ENCODE measurements at regions of chr14 and their contacts with region 1.

Region 1: GRCh38 chr14:30621940-30622830 is at the start of gene SCFD1:
- DNase-seq: peak; percentile 94
- ATAC-seq: peak; percentile 98
- H3K4me3 ChIP-seq: peak within 1 kb of the TSS; percentile 78 to 98 (median 88)
- H3K4me3 Mint-ChIP-seq: peak within 1 kb of the TSS; percentile 98
- H3K27ac ChIP-seq: peak within 1 kb of the TSS; percentile 82 to 94
- H3K27ac Mint-ChIP-seq: peak within 1 kb of the TSS; percentile 98
- H3K4me1 ChIP-seq: peaks cover 14 to 28% of the 10 kb centered on the region in 2 donors
- H3K4me1 Mint-ChIP-seq: peaks cover 47% of the 10 kb centered on the region
- H3K27me3 ChIP-seq: no peaks in the 10 kb centered on the region
- H3K27me3 Mint-ChIP-seq: no peaks in the 10 kb centered on the region
- CTCF ChIP-seq: no peak
- total RNA-seq, gene SCFD1: 73.0 and 79.0 TPM in 2 replicates

Region 2: DNA sequence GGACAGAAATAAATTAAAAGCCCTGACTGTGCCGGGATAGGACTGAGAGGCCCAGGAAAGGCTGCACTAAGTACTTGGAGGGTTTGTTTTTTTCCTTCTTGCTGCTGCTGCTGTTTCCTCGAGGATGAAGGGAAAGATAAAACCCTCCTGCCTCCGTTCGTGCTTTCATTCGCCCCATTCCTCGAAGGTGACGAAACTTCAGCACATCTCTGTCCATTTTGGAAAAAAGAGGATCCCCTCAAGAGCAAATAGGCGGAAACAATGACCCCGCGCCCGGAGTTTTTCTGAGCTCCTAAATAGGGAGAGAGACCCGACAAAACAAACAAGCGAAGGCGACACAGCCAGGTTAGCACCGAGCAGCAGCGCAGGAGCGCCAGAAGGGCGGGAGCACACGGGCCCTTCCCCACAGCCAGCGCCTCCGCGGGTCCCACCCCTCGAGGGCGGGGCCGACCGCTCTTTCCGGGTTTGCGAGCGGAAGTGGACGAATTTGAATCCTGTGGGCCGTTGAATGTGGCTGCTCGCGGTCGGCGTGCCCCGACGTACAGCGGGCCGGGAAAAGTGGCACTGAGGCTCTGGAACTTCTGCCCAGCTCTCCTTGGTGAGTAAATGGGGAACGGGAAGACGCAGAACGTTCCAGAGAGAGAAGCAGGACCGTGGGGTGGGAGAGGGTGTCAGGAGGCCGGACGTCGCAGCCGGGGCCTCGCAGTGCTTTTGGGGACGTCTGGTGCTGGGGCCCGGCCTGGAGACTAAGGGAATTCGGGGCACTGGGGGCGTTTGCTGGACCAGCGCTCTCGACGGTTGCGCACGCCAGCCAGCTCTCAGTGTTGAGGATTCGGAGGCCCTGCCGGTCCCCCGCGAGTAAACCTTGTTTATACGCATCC is 63.3 kb before region 1 on chr14 and contains the start of gene G2E3:
- CTCF ChIA-PET with region 1: no interaction called
- POLR2A ChIA-PET with region 1: interaction called, 3 read pairs
- intact Hi-C with region 1: loop called (anchors 1 kb)
- DNase-seq: peak; percentile 90
- ATAC-seq: peak; percentile 99
- H3K4me3 ChIP-seq: peak within 1 kb of the TSS; percentile 87 to 99 (median 95)
- H3K4me3 Mint-ChIP-seq: peak within 1 kb of the TSS; percentile 100
- H3K27ac ChIP-seq: peak within 1 kb of the TSS; percentile 77 to 89
- H3K27ac Mint-ChIP-seq: peak within 1 kb of the TSS; percentile 98
- H3K4me1 ChIP-seq: peaks cover 15 to 17% of the 10 kb centered on the region in 2 donors
- H3K4me1 Mint-ChIP-seq: peaks cover 32% of the 10 kb centered on the region
- H3K27me3 ChIP-seq: no peaks in the 10 kb centered on the region
- H3K27me3 Mint-ChIP-seq: no peaks in the 10 kb centered on the region
- CTCF ChIP-seq: no peak
- total RNA-seq, gene G2E3: 29.2 and 35.4 TPM in 2 replicates

Region 3: GRCh38 chr14:30632730-30633129 is 10.5 kb after region 1 on chr14:
- CTCF ChIA-PET with region 1: no interaction called
- POLR2A ChIA-PET with region 1: interaction called, 12 read pairs
- intact Hi-C with region 1: no loop called
- DNase-seq: no peak
- ATAC-seq: no peak
- H3K4me3 ChIP-seq: no peak overlapping the region
- H3K4me3 Mint-ChIP-seq: no peak overlapping the region
- H3K27ac ChIP-seq: no peak overlapping the region
- H3K27ac Mint-ChIP-seq: no peak overlapping the region
- H3K4me1 ChIP-seq: no peaks in the 10 kb centered on the region
- H3K4me1 Mint-ChIP-seq: peaks cover 10% of the 10 kb centered on the region
- H3K27me3 ChIP-seq: no peaks in the 10 kb centered on the region
- H3K27me3 Mint-ChIP-seq: no peaks in the 10 kb centered on the region
- CTCF ChIP-seq: no peak

Measured in B cell (primary cell).